Sigmoid colon (tissue), 7 donors: ENCODE measurements at regions of chr14 and their contacts with region 1.

Region 1: GRCh38 chr14:94136575-94137331 is 7.3 kb upstream of the IFI27L2 start:
- DNase-seq: peak; percentile 91
- H3K4me3 ChIP-seq: no peak overlapping the region
- H3K27ac ChIP-seq: no peak overlapping the region
- H3K4me1 ChIP-seq: peaks cover 0 to 4% (median 0%) of the 10 kb centered on the region in 4 donors
- H3K27me3 ChIP-seq: no peaks in the 10 kb centered on the region
- CTCF ChIP-seq: peak; percentile 74 to 94 (median 88)
- EP300 ChIP-seq: no peak
- POLR2A ChIP-seq: no peak

Region 2: GRCh38 chr14:93772263-93772662 is 364.5 kb before region 1 on chr14:
- intact Hi-C with region 1: no loop called
- DNase-seq: peak; percentile 86
- H3K4me3 ChIP-seq: no peak overlapping the region
- H3K27ac ChIP-seq: peak overlapping the region; percentile 62 to 77 (median 72)
- H3K4me1 ChIP-seq: peaks cover 0 to 46% (median 34%) of the 10 kb centered on the region in 4 donors
- H3K27me3 ChIP-seq: no peaks in the 10 kb centered on the region
- CTCF ChIP-seq: no peak
- EP300 ChIP-seq: peak in 1 of 4 donors; percentile 31
- POLR2A ChIP-seq: no peak

Region 3: DNA sequence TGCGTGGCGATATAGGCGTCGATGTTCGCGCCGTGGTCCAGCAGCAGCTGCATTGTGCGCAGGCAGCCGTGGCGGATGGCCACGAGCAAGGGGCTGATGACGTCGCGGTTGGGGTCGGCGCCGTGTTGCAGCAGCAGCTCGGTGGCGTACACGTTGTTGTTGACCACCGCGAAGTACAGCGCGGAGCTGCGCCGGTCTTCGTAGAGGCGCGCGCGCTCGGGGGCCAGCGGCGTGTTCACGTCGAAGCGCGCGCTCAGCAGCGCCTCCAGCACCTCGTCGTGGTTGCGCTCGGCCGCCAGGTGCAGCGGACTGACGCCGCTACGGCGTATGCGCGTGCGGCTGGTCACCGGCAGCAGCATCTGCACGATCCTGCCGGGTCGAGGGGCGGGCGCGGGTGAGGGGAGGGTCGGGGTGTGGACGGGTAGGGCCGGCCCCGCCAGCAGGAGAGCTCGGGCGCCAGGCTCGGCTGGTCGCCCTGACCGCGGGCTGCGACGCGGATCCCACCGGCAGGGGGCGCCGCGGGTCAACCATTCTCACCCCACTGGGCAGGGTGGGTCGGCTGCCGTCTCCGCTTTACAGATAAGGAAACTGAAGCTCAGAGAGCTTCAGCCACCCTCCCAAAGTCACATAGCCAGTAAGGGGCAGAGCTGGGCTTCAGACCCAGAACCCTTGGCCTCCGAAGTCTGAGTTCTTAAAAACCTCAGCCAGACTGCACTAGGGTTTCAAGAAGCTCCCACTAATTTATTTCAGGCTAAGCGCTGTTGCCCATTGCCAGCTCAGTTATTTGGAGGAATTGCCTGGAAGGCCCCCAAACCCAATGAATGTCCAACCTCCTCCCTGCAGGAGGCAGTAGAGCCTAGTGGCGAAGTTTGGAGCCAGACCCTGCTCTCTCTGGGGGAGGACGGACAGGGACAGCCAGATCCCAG is 197.2 kb before region 1 on chr14:
- intact Hi-C with region 1: loop called (anchors 5 kb)
- DNase-seq: peak; percentile 91
- H3K4me3 ChIP-seq: peak overlapping the region in 2 of 4 donors; percentile 6 to 27
- H3K27ac ChIP-seq: peak overlapping the region; percentile 55 to 92 (median 76)
- H3K4me1 ChIP-seq: peaks cover 0 to 54% (median 34%) of the 10 kb centered on the region in 4 donors
- H3K27me3 ChIP-seq: no peaks in the 10 kb centered on the region
- CTCF ChIP-seq: peak; percentile 40 to 82 (median 61)
- EP300 ChIP-seq: no peak
- POLR2A ChIP-seq: no peak

Region 4: DNA sequence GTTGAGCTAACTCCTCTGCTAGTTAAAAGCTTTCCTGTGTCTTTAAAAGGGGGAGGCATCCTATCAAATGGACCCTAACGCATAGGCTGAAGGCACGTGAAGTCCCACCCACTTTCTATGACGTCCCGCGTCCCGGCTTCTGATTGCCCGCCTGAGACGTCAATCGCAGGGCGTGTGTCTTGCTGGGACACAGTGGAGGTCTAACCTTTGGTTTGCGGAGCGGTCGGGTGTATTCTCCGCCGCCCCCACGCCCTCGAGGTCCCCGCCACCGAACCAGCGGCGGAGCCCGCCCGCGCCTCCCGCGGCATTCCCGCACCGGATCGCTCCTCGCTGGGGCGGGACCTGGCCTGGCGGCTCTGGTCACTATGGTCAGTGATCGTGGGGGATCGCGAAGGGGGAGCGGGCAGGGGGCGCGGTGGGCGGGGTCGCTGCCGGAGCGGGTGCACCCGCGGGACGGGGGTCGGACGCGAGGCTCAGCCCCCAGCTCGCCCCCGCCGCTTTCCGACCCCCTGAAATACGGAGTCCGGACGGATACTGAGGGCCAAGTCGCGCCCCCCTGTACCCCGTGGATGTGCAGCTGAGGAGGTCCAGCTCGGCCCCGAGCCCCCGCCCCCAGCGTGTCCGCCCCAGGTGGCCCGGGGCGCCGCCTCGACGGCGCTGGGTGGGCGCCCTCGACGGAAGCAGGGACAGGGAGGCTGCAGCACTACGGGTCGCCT is 110.4 kb before region 1 on chr14 and contains the start of gene OTUB2:
- intact Hi-C with region 1: no loop called
- DNase-seq: peak; percentile 98
- H3K4me3 ChIP-seq: peak within 1 kb of the TSS; percentile 67 to 84 (median 74)
- H3K27ac ChIP-seq: peak within 1 kb of the TSS in 2 of 4 donors; percentile 14 to 16
- H3K4me1 ChIP-seq: peaks cover 0 to 16% (median 10%) of the 10 kb centered on the region in 4 donors
- H3K27me3 ChIP-seq: no peaks in the 10 kb centered on the region
- CTCF ChIP-seq: no peak
- EP300 ChIP-seq: no peak
- POLR2A ChIP-seq: no peak
- total RNA-seq, gene OTUB2: 0.14 to 0.71 (median 0.52) TPM

Region 5: DNA sequence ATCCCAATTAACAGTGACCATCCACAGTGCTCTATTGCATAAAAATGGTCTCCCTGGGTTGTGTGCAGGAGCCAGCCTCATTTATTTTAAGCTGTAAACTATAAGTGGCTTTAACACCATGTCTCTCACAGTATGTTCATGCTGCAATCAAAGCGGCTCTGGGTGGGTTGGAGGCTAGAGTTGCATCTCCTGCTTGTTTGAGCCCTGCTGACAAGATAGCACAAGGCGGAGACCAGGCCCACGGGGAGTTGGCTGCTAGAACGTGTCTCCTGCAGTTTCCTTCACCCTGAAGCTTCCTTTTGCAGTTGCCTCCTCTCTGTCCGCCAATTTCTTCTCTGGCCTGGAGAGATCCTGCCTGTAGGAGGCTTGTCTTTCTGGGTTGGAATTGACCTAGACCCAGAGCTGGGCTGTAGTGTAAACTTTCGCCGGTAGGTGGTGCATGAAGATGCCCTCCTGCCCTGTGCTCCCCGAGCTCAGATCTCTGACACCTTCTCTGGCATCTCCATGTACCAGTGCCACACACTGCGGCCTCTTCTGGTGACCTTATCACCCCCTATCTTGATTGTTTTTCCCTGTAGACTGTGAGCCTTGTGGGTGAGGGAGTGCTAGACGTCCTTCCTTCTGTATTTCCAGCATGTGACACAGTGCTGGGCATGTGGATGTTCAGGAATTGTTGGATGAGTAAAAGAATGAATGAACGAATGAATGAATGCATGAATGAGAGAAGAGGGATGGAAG is 100.3 kb before region 1 on chr14:
- intact Hi-C with region 1: loop called (anchors 2 kb)
- DNase-seq: no peak
- H3K4me3 ChIP-seq: no peak overlapping the region
- H3K27ac ChIP-seq: no peak overlapping the region
- H3K4me1 ChIP-seq: peaks cover 0 to 6% (median 2%) of the 10 kb centered on the region in 4 donors
- H3K27me3 ChIP-seq: no peaks in the 10 kb centered on the region
- CTCF ChIP-seq: peak; percentile 67 to 88 (median 74)
- EP300 ChIP-seq: no peak
- POLR2A ChIP-seq: no peak

Region 6: GRCh38 chr14:94051115-94051514 is 85.6 kb before region 1 on chr14:
- intact Hi-C with region 1: loop called (anchors 1 kb)
- DNase-seq: peak; percentile 81
- H3K4me3 ChIP-seq: no peak overlapping the region
- H3K27ac ChIP-seq: peak overlapping the region in 1 of 4 donors; percentile 19
- H3K4me1 ChIP-seq: peaks cover 0 to 18% (median 13%) of the 10 kb centered on the region in 4 donors
- H3K27me3 ChIP-seq: no peaks in the 10 kb centered on the region
- CTCF ChIP-seq: peak in 3 of 4 experiments; percentile 14 to 45 (median 17)
- EP300 ChIP-seq: no peak
- POLR2A ChIP-seq: no peak

Region 7: GRCh38 chr14:94180655-94181271 is 44.0 kb after region 1 on chr14:
- intact Hi-C with region 1: loop called (anchors 2 kb)
- DNase-seq: no peak
- H3K4me3 ChIP-seq: no peak overlapping the region
- H3K27ac ChIP-seq: no peak overlapping the region
- H3K4me1 ChIP-seq: peaks cover 0 to under 1% (median under 1%) of the 10 kb centered on the region in 4 donors
- H3K27me3 ChIP-seq: peaks cover 2 to 44% (median 23%) of the 10 kb centered on the region in 3 donors
- CTCF ChIP-seq: peak; percentile 7 to 48 (median 30)
- EP300 ChIP-seq: no peak
- POLR2A ChIP-seq: no peak